Activated CD4-positive, alpha-beta memory T cell treated with anti-CD3 and anti-CD28 coated beads for 36 hours (primary cell): ENCODE measurements at regions of chrX and their contacts with region 1.

Region 1: GRCh38 chrX:150693775-150694574 is 779 bp downstream of the MTMR1 start:
- DNase-seq: peak; percentile 86
- H3K4me3 Mint-ChIP-seq: peak overlapping the region; percentile 89
- H3K27ac Mint-ChIP-seq: peak overlapping the region; percentile 98
- H3K4me1 Mint-ChIP-seq: peaks cover 62% of the 10 kb centered on the region
- H3K27me3 Mint-ChIP-seq: no peaks in the 10 kb centered on the region

Region 2: GRCh38 chrX:150365051-150365989 is 328.7 kb before region 1 on chrX:
- CTCF ChIA-PET with region 1: interaction called, 3 read pairs
- POLR2A ChIA-PET with region 1: no interaction called
- intact Hi-C with region 1: loop called (anchors 5 kb)
- DNase-seq: peak; percentile 76
- H3K4me3 Mint-ChIP-seq: peak overlapping the region; percentile 78
- H3K27ac Mint-ChIP-seq: peak overlapping the region; percentile 64
- H3K4me1 Mint-ChIP-seq: peaks cover 18% of the 10 kb centered on the region
- H3K27me3 Mint-ChIP-seq: peaks cover 5% of the 10 kb centered on the region

Region 3: DNA sequence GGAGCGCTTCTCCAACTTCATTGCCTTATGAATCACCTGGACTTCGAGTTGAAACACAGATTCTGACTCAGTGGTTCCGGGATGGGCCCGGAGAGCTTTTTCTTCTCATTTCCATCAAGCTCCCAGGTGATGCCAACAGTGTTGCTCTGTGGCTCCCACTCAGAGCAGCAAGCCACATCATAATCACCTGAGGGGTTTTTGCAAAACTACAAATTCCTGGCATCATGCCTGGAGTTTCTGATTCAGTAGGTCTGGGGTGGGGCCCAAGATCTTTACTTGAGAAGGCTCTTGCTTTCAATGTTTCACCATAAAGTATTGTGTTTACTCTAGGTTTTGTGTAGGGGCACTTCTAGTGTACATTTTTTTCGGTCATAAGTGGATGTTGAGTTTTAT is 118.6 kb before region 1 on chrX:
- CTCF ChIA-PET with region 1: interaction called, 3 read pairs
- POLR2A ChIA-PET with region 1: interaction called, 7 read pairs
- intact Hi-C with region 1: loop called (anchors 2 kb)
- DNase-seq: peak; percentile 85
- H3K4me3 Mint-ChIP-seq: peak overlapping the region; percentile 68
- H3K27ac Mint-ChIP-seq: peak overlapping the region; percentile 97
- H3K4me1 Mint-ChIP-seq: peaks cover 85% of the 10 kb centered on the region
- H3K27me3 Mint-ChIP-seq: no peaks in the 10 kb centered on the region

Region 4: DNA sequence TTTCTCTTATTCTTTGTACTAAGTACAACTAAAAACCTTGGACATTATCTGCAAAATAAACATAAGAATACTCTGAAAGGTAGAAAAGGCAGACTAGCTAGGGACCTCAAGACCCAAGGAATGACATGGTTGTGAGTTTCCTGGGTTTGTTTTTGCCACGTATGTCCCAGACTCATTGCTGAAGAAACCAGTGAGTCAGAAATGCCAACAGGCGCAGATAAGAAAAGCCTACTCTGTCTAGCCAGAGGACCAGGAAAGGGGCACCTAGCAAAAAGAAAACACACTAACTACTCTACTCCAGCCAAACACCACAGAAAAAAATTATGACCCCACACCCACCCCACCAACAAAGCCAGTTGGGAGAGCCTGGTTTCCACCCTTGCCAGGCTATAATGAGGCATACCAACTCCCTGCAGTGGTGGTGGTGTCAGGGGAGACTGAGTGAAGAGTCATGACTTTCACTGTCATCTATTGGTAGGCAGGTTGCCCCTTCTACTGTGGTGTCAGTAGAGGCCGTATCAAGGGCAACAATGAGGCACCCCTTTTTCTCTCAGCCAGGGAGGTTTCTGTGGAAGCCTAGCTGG is 10.1 kb after region 1 on chrX:
- CTCF ChIA-PET with region 1: interaction called, 13 read pairs
- POLR2A ChIA-PET with region 1: interaction called, 19 read pairs
- intact Hi-C with region 1: loop called (anchors 1 kb)
- DNase-seq: peak; percentile 65
- H3K4me3 Mint-ChIP-seq: no peak overlapping the region
- H3K27ac Mint-ChIP-seq: peak overlapping the region; percentile 78
- H3K4me1 Mint-ChIP-seq: peaks cover 53% of the 10 kb centered on the region
- H3K27me3 Mint-ChIP-seq: no peaks in the 10 kb centered on the region

Region 5: GRCh38 chrX:150873616-150874015 is 179.6 kb after region 1 on chrX:
- CTCF ChIA-PET with region 1: no interaction called
- POLR2A ChIA-PET with region 1: no interaction called
- intact Hi-C with region 1: loop called (anchors 10 kb)
- DNase-seq: peak; percentile 40
- H3K4me3 Mint-ChIP-seq: no peak overlapping the region
- H3K27ac Mint-ChIP-seq: peak overlapping the region; percentile 66
- H3K4me1 Mint-ChIP-seq: peaks cover 50% of the 10 kb centered on the region
- H3K27me3 Mint-ChIP-seq: no peaks in the 10 kb centered on the region